ENCODE measurements at regions of chr10 and their contacts with region 1.

Region 1: DNA sequence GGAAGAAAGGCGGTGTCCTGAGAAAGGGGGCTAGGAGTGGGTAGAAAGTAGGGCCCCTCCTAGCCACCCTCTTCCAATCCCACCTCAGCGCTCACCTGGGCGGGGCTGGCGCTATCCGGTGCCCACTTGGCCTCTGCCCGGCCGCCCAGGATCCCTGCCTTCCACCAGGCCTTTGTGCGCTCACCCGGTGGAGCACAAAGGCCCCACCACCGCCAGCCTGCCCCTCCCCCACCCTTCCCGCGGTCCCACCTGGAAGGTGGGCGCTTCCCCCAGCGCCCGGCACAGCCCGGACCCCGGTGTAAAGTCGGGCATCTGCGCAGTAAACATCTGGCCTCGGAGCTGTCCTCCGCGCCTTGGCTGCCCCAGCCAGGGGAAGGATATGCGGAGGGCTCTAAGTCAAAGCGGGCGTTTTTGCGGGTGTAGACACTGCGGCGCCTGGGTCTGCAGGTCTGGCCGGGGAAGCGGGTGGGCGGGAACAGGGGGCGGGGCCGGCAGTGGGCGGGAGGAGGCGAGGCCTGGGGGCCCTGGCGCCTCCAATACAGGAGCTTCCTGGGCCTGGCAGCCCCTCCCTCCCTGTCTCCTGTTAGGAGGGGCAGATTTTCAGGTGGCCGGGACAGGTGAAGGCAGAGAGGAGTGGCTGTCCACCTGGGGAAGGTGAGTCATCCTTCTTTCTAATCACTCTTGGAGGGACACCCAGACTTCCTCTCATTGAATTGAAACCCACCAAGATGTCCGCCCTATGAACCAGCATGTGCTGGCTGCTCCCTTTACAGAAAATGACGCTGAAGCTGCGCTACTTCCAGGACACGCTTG is 49.3 kb downstream of the PNLIPRP2 start:
- DNase-seq: peak in 1 of 2 donors; percentile 82
- H3K4me3 ChIP-seq: no peak overlapping the region
- CTCF ChIP-seq: no peak
- POLR2A ChIP-seq: no peak

Region 2: DNA sequence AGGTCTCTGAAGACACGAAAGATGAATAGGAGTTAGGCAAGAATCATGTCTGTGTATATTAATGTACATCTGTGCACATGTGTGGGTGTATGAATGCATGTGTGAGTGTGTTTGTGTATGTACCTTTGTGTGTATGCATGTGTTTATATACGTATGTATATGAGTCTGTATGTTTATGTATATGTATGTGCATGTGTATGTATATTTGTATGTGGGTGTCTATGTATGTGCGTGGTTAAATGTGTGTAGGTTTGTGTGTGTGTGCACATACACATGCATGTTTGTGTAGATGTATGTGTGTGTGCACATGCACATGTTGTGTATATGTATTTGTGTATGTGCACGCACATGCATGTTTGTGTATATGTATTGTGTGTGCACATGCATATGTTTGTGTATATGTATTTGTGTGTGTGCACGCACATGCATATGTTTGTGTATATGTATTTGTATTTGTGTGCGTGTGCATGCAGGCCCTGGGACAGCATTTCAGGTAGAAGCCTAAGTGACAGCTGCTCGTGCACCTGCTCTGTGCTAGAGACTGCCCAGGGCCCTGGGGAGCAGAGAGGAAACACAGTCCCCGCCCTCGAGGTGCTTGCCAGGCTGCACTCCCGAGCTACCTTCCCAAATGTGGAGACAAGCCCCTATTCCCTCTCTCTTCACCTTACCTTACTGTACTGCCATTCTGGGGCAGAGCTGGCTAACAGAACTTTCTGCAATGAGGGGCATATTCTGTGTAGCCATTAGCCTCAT is 67.2 kb before region 1 on chr10:
- intact Hi-C with region 1: no loop called
- DNase-seq: no peak
- H3K4me3 ChIP-seq: no peak overlapping the region
- CTCF ChIP-seq: no peak
- POLR2A ChIP-seq: no peak

Region 3: GRCh38 chr10:117167789-117168674 is 498.0 kb after region 1 on chr10:
- intact Hi-C with region 1: loop called (anchors 10 kb)
- DNase-seq: peak; percentile 29 to 91
- H3K4me3 ChIP-seq: no peak overlapping the region
- CTCF ChIP-seq: peak in 1 of 3 donors; percentile 67
- POLR2A ChIP-seq: no peak

Region 4: DNA sequence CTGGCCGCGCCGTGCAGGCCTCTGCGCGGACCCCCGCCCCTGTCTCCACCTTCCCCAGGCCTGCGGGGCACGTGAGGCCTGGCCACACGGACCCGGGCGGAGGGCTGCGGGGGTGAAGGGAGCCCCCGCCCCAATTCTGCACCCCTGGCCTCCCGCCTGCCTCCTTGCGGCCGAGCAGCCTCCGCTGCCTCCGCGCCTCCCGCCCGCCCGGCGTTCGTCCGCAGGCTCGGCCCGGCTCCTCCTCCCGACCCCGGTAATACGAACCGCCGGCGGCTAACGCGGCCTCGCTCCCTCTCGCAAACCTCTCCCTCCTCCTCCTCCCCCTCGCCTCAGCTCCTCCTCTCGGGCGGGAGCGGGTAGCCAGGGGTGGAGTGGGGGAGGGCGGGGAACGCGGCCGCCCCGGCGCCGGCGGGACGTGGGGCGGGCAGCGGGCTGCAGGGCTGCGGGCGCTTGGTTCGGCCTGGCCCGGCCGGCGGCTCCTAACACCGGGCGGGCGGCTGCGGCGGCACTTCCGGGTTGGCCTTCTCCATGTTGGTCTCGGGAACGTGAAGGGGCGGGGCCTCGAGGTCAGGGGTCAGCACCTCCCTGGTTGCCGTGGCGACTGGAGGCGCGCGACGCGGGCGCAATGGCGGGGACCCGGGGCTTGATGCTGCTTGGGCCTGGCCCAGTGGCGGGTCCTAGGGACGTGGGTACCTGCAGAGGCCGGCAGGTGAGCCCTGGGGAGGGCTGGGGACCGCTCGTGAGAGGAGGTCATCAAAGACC is 1376.5 kb after region 1 on chr10 and contains the start of gene RAB11FIP2:
- intact Hi-C with region 1: no loop called
- DNase-seq: peak; percentile 94 to 99
- H3K4me3 ChIP-seq: peak within 1 kb of the TSS; percentile 75
- CTCF ChIP-seq: no peak
- POLR2A ChIP-seq: peak in 1 of 2 donors; percentile 5
- total RNA-seq, gene RAB11FIP2: 7.3 to 18.2 (median 14.1) TPM